BJ (cell line): ENCODE measurements at regions of chr7 and their contacts with region 1.

Region 1: DNA sequence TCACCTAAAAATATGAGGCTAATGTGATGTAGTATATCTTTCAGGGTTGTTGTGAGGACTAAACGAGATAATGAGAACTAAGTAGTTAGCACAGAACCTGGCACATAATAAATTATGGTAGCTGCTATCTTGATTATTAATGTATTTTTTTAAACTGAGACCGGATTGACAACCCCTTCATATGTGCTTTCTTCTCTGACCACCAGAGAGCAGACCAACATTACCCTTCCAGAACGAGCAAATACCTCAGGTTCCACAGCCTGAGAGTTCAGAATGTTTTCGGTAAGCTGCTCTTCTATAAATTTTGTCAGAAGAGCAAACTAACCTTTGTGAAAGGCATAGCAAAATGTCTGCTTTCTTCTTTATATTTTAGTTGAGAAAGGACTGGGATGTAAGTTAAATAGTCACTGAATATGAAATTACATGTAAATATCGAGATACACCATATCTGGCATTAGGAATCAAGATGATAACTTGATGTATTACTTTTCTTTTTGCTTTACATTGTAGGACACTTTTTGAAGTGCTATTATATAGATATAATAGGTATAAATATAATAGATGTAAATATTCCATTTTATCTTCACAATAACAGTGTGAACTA is 13.6 kb upstream of the BPGM start:
- DNase-seq: no peak
- H3K4me3 ChIP-seq: no peak overlapping the region
- H3K27me3 ChIP-seq: no peaks in the 10 kb centered on the region
- CTCF ChIP-seq: peak; percentile 66

Region 2: DNA sequence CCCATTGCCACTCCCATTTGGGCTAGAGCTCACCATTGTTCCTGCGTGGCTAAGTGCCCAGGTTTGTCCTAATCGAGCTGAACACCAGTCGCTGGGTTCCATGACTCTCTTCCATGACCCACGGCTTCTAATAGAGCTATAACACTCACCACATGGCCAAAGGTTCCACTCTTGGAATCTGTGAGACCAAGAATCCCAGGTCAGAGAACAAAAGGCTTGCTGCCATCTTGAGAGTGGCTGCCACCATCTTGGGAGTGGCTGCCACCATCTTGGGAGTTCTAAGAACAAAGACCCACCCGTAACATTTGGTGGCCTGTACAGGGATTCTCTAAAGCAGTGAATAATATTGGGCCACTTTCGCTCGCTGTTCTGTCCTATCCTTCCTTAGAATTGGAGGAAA is 47.1 kb before region 1 on chr7:
- CTCF ChIA-PET with region 1: no interaction called
- POLR2A ChIA-PET with region 1: no interaction called
- DNase-seq: no peak
- H3K4me3 ChIP-seq: no peak overlapping the region
- H3K27me3 ChIP-seq: peaks cover 6% of the 10 kb centered on the region
- CTCF ChIP-seq: no peak

Region 3: GRCh38 chr7:134619627-134620331 is 13.3 kb before region 1 on chr7:
- CTCF ChIA-PET with region 1: interaction called, 10 read pairs
- POLR2A ChIA-PET with region 1: no interaction called
- DNase-seq: peak; percentile 81
- H3K4me3 ChIP-seq: no peak overlapping the region
- H3K27me3 ChIP-seq: no peaks in the 10 kb centered on the region
- CTCF ChIP-seq: no peak

Region 4: DNA sequence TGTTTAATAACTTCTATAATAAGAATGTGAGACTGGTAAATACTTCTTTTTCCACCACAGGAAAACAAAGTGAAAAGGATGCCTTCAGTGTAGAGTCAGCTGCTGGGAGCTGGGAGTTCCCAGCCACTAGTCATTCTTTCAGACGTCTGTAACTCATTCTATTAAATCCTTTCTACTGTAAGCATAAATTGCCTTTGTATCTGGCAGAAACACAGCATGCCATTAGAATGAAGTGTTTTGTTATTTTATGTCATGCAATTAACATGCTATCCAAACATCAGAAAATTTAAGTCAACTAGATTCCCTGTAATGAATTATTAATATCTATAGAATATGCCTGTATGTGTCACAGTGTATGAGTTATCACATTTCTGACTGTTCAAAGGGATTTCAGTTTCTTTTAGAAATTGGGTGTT is 27.9 kb after region 1 on chr7:
- CTCF ChIA-PET with region 1: interaction called, 13 read pairs
- POLR2A ChIA-PET with region 1: no interaction called
- DNase-seq: peak; percentile 67
- H3K4me3 ChIP-seq: no peak overlapping the region
- H3K27me3 ChIP-seq: no peaks in the 10 kb centered on the region
- CTCF ChIP-seq: no peak

Region 5: DNA sequence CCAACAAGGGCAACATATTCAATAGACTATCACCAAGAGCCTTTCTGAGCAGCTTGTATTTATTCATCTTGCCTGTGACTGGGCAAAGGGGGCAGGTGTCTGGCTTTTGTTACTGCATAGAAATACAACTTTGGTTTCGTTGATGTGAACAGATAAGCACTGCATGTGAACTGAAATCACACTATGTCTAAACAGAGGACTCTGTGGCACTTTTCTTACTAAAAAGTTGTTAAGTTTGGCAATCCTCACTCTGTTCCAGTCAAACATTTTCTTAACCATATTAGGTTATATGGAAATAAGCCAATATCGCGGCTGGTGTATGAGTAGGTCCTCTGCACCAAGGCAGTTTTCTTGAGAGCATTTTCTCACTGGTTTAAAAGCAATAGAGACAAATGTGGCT is 194.8 kb after region 1 on chr7:
- CTCF ChIA-PET with region 1: no interaction called
- POLR2A ChIA-PET with region 1: no interaction called
- DNase-seq: no peak
- H3K4me3 ChIP-seq: no peak overlapping the region
- H3K27me3 ChIP-seq: no peaks in the 10 kb centered on the region
- CTCF ChIP-seq: no peak